ENCODE measurements at regions of chr16 and their contacts with region 1.

Region 1: GRCh38 chr16:52191531-52192134 is 355.3 kb downstream of the TOX3 start:
- DNase-seq: peak; percentile 68 to 77
- H3K4me3 ChIP-seq: no peak overlapping the region
- H3K4me3 Mint-ChIP-seq: no peak overlapping the region
- H3K27ac Mint-ChIP-seq: no peak overlapping the region
- H3K4me1 ChIP-seq: no peaks in the 10 kb centered on the region
- H3K4me1 Mint-ChIP-seq: no peaks in the 10 kb centered on the region
- H3K27me3 ChIP-seq: no peaks in the 10 kb centered on the region
- H3K27me3 Mint-ChIP-seq: peaks cover 4% of the 10 kb centered on the region
- CTCF ChIP-seq: peak; percentile 94 to 95

Region 2: DNA sequence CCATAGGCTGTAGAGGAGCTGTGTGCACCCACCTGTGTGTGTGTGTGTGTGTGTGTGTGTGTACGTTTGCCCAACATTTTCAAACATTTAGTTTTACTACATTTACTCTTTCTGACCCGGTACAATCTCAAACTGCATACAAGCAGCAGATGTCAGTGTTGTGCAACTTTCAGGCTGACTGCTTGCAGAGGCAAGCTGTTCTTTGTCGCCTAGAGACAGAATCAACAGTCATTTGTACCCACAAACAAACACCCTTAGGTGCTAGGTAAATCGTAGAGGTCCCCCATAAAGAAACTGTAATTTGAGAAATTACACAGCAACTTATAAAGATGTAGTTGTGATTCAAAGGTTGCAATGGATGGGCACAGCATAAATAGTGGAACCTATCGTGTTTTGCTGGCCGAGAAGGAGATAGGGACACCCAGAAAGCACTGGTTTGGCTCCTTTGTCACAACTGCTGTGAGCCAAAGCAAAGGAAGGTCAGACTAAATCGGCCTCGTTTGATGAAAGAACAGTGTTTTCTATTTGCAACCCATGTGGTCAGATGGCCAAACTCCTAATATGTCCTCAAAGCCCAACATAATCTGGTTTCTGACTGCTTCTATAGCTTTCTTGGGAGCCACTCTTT is 123.1 kb before region 1 on chr16:
- CTCF ChIA-PET with region 1: interaction called, 6 read pairs
- POLR2A ChIA-PET with region 1: no interaction called
- intact Hi-C with region 1: loop called (anchors 1 kb)
- DNase-seq: peak; percentile 44 to 46
- H3K4me3 ChIP-seq: no peak overlapping the region
- H3K4me3 Mint-ChIP-seq: no peak overlapping the region
- H3K27ac Mint-ChIP-seq: no peak overlapping the region
- H3K4me1 ChIP-seq: no peaks in the 10 kb centered on the region
- H3K4me1 Mint-ChIP-seq: no peaks in the 10 kb centered on the region
- H3K27me3 ChIP-seq: no peaks in the 10 kb centered on the region
- H3K27me3 Mint-ChIP-seq: peaks cover 5% of the 10 kb centered on the region
- CTCF ChIP-seq: peak in 1 of 2 experiments; percentile 49

Region 3: DNA sequence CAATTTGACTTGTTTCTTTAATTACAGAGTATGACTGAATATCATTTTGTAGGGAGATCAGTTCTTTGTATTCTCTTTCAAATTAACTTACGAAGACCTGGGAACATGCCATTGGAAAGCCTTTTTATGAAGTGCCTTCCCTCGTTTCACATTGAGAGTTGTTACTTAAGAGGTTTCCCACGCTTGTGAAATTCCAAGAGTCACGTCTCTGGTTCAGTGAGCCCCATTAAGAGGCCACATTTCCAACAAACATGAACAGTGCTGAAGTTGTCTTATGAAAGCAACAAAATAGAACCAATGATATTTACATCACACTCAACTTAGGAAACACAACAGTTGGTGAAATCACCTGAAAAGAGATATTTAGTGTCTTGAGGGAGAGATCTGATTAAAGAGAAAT is 21.2 kb after region 1 on chr16:
- CTCF ChIA-PET with region 1: no interaction called
- POLR2A ChIA-PET with region 1: no interaction called
- intact Hi-C with region 1: no loop called
- DNase-seq: no peak
- H3K4me3 ChIP-seq: no peak overlapping the region
- H3K4me3 Mint-ChIP-seq: no peak overlapping the region
- H3K27ac Mint-ChIP-seq: no peak overlapping the region
- H3K4me1 ChIP-seq: no peaks in the 10 kb centered on the region
- H3K4me1 Mint-ChIP-seq: no peaks in the 10 kb centered on the region
- H3K27me3 ChIP-seq: no peaks in the 10 kb centered on the region
- H3K27me3 Mint-ChIP-seq: peaks cover 7% of the 10 kb centered on the region
- CTCF ChIP-seq: no peak